Caco-2 (cell line): ENCODE measurements at regions of chr1 and their contacts with region 1.

Region 1: DNA sequence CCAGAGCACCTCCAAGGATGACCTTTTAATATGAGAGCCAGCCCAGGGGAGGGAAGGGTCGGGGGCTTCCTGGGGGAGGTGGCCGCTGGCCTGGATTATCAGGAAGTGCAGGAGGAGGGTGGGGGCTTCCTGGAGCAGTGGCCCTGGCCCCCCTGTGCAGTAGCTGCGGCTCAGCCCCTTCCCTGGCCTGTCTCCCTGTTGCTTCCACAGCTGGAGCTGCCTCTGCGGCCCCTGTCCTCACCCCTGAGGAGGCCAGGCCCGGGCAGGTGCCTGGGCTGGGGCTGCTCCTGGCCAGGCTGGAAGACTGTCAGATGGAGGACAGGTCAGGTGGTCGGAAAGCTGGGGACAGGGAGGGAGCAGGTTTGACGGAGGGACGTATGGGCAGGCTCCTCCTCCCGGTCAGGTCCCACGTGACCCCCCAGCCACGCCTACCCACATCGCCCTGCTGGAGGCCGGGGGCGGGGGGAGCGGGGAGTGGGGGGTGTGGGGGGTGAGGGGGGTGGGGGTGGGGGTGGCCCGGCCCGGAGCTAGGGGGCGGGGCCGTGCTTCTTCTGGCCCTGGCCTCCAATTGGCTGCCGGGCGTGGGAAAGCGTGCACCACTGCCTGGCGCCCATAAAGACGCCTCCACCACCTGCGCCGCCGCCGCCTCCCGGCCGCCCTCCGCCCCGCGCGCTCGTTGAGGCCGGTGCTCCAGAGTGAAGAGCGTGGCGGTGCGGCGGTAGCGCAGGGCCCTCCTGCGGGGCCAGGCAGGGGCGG is 10.2 kb upstream of the TNFRSF14 start:
- DNase-seq: peak; percentile 90 to 91
- H3K4me3 ChIP-seq: peak overlapping the region; percentile 65
- H3K4me3 Mint-ChIP-seq: peak overlapping the region; percentile 85
- H3K27ac Mint-ChIP-seq: no peak overlapping the region
- H3K4me1 ChIP-seq: peaks cover 8% of the 10 kb centered on the region
- H3K4me1 Mint-ChIP-seq: no peaks in the 10 kb centered on the region
- H3K27me3 ChIP-seq: no peaks in the 10 kb centered on the region
- H3K27me3 Mint-ChIP-seq: no peaks in the 10 kb centered on the region
- CTCF ChIP-seq: no peak

Region 2: DNA sequence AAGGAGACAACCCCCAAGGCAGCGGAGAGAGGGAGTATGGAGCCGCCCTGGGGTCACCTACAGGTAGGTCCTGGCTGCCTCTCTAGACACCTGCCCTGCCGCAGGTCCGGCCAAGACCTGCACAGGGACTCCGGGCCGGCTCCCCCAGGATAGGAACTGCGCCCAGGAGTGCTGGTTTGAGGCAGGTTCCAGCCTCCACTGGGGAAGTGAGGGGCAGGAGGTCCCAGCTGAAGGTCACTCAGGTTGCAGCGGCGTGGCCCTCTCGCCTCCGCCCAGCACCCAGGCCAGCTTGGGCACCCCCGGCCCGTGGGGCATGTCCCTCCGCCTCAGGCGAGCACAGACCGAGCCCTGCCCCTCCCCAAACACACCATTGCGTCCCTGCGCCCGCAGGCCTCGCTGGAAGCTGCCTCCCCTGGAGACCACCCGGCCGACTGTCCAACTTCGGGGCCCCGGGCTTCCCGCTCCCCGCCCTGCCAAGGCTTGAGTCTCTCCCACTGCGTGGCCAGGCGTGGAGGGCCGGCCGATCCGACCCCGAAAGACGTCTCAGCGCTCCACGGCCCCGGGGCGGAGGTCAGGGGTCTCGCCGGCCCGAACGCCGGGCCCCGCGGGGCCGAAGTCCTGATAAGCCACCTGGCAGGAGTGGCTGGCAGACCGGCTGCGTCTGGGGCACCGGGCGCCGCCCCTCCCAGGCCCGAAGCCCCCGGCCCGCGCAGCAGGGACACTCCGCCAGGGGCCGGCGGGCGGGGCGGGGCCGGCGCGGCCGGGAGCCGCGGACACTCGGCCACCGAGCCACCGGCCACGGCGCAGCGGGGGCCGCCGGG is 319.2 kb before region 1 on chr1:
- CTCF ChIA-PET with region 1: no interaction called
- POLR2A ChIA-PET with region 1: no interaction called
- intact Hi-C with region 1: no loop called
- DNase-seq: peak in 1 of 2 experiments; percentile 26
- H3K4me3 ChIP-seq: peak overlapping the region; percentile 84
- H3K4me3 Mint-ChIP-seq: peak overlapping the region; percentile 76
- H3K27ac Mint-ChIP-seq: no peak overlapping the region
- H3K4me1 ChIP-seq: no peaks in the 10 kb centered on the region
- H3K4me1 Mint-ChIP-seq: peaks cover 6% of the 10 kb centered on the region
- H3K27me3 ChIP-seq: no peaks in the 10 kb centered on the region
- H3K27me3 Mint-ChIP-seq: no peaks in the 10 kb centered on the region
- CTCF ChIP-seq: no peak

Region 3: DNA sequence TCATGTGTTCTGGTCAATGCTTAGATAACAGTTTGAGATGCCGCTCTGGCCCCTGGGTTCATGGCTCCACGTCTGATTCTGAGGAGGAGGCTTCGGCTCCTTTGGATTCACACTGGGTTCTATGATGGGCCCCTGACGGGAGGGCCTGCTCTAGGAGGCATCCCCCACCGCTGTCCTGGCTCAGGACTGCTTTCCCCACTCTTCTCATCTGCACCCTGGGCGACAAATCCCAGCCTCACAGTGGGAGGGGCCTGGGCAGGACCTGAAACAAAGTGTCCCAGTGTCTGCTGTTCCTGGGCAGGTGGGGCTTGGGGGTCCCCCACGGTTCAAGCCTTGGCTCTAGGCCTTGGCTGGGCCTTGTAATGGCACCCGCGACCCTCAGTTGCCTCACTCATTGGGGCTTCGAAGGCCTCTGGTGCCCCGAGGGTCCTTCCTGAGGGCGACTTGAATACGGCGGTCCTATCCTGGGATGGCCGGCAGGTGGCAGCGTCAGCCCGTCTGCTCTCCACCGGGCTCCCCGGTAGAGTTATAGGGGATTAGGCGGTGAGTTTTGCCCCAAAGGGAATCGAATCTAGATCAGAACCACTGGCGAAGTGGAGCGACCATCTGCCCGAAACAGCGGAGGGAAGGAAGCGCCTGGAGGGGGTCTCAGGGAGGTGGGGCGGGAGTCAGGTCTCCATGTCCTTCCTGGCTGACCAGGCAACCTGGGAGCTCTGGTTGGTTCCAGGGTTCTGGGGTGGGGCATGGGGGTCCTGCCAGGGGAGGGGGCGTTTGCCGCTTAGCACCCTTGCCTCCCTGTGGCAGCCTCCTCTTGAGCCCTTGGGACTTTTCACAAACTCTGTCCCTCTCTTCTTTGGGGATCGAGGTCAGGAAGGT is 131.6 kb before region 1 on chr1:
- CTCF ChIA-PET with region 1: interaction called, 8 read pairs
- POLR2A ChIA-PET with region 1: interaction called, 4 read pairs
- intact Hi-C with region 1: loop called (anchors 1 kb)
- DNase-seq: peak; percentile 74 to 75
- H3K4me3 ChIP-seq: peak overlapping the region; percentile 84
- H3K4me3 Mint-ChIP-seq: peak overlapping the region; percentile 85
- H3K27ac Mint-ChIP-seq: peak overlapping the region; percentile 83
- H3K4me1 ChIP-seq: no peaks in the 10 kb centered on the region; the same call in 1 of the 2 replicates
- H3K4me1 Mint-ChIP-seq: peaks cover 5% of the 10 kb centered on the region
- H3K27me3 ChIP-seq: no peaks in the 10 kb centered on the region
- H3K27me3 Mint-ChIP-seq: peaks cover 12% of the 10 kb centered on the region
- CTCF ChIP-seq: peak; percentile 80 to 90

Region 4: DNA sequence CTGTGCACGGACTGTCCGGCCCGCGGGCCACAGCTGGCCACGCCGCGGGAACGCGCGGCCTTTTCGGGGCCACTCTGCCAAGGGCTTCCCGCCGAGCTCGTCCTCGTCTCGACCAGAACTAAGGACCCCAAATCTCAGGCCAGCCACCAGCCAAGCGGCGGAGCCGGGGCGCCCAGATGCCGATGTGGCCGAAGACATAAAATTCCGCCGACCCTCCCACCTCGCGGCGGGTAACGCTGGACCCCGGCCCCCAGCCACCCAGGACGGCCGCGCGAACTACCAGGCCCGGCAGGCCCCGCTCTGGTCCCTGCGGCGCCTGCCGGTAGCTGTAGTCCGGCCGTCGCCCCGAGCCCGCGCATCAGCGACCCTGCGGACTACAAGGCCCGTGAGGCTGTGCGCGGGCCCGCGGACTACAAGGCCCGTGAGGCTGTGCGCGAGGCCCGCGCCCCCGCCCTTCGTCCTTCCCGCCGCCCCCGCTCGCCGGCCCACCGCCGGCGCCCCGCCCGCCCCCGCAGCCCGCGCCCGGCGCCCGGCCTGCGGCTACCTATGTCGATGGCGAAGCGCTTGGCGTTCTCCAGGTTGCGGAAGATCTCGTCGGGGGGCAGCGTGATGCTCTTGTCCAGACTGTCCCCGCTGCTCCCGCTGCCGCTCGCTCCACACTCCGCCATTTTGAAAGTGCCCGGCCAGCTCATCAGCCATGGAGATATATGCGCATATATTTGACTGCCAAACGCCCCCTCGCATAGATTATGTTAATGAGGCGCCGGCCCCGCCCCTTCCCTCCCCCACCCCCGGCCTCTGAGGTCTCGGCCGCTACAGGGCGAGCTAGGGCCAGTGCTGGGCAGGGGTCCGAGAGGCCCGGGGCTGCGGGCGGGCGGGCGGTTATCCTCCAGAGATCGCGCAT is 19.8 kb before region 1 on chr1 and contains the start of gene PANK4:
- CTCF ChIA-PET with region 1: interaction called, 6 read pairs
- POLR2A ChIA-PET with region 1: interaction called, 8 read pairs
- intact Hi-C with region 1: loop called (anchors 1 kb)
- DNase-seq: peak; percentile 88 to 90
- H3K4me3 ChIP-seq: peak within 1 kb of the TSS; percentile 65
- H3K4me3 Mint-ChIP-seq: peak within 1 kb of the TSS; percentile 81
- H3K27ac Mint-ChIP-seq: peak within 1 kb of the TSS; percentile 69
- H3K4me1 ChIP-seq: 0 out of 2 replicates have a peak, but pooled peaks cover 3% of the 10 kb centered on the region
- H3K4me1 Mint-ChIP-seq: no peaks in the 10 kb centered on the region
- H3K27me3 ChIP-seq: peaks cover 2% of the 10 kb centered on the region
- H3K27me3 Mint-ChIP-seq: peaks cover 4% of the 10 kb centered on the region
- CTCF ChIP-seq: no peak
- total RNA-seq, gene PANK4: 27.0 and 31.7 TPM in 2 replicates

Region 5: DNA sequence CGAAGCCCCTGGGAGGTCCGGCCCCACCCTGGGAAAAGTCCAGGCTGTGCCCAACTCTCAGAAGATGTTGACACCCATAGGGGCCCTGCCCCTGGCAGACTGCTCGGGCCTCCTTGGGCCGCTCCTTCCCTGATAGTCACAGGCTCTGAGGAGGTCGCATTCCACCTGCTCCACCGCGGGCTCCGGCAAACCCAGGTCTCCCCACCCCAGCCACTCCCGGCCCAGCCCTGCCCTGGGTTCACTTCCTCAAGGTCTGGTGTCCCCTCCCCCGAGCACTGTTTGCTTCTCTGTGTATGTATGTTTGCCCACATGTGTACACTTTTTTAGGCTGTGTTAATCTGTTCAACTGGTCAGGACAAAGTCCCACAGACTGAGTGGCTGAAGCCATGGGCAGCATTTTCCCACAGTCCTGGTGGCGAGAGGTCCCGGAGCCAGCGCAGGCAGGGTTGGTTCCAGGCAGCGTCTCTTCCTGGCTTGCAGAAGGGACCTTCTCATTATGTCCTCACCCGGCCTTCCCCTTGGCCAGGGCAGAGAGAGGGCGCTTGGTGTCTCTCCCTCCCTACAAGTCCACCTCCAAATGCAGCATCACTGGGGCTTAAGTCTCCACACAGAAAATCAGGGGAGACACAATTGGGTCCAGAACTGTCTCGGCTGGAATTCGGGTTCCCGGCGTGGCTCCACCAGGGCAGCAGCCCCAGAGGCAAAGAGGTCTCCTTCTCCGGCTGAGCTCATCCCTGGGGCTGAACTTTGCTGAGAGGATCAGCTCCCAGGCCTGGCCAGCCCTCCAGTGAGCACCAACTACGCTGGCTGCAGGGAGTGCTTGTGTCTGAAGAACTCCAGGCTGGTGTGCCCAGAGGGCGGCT is 30.1 kb after region 1 on chr1:
- CTCF ChIA-PET with region 1: no interaction called
- POLR2A ChIA-PET with region 1: no interaction called
- intact Hi-C with region 1: no loop called
- DNase-seq: peak; percentile 49 to 75
- H3K4me3 ChIP-seq: no peak overlapping the region
- H3K4me3 Mint-ChIP-seq: no peak overlapping the region
- H3K27ac Mint-ChIP-seq: no peak overlapping the region
- H3K4me1 ChIP-seq: peaks cover 12% of the 10 kb centered on the region; the same call in 1 of the 2 replicates
- H3K4me1 Mint-ChIP-seq: no peaks in the 10 kb centered on the region
- H3K27me3 ChIP-seq: no peaks in the 10 kb centered on the region
- H3K27me3 Mint-ChIP-seq: no peaks in the 10 kb centered on the region
- CTCF ChIP-seq: no peak